IMR-90 (cell line): ENCODE measurements at regions of chr22 and their contacts with region 1.

Region 1: DNA sequence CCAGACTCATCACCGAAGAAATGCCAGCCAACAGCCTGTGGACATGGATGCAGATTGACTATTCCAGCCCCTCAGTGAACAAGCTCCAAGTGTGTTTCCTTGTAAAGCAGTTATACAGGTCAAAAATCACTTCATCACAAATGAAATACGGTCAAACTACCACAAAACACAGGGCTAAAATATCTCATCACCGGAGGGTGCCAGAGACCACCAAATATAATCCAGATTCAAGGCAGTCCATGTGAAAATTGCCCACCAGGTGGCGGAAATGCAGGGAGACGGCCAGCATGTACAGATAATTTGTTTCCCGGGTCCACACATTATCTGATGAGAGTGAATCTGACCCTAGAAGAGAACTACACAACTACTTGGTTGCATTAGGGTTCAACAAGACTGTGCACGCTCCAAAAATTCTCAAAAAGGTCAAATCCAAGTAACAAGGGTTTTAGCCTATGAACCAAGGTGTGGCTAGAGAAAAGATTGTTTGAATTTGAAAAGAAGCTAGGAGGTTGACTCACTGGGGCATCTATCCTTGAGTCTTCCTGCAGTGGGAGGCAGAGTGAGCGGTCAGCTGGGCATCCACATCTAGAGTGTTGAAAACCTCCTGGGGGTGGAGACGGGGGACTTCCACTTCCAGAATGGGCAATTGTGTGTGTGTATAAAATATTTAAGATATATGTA is 71.7 kb downstream of the IGLL5 start:
- DNase-seq: peak; percentile 66
- ATAC-seq: peak; percentile 73
- H3K4me3 ChIP-seq: no peak overlapping the region
- H3K27ac ChIP-seq: no peak overlapping the region
- H3K4me1 ChIP-seq: no peaks in the 10 kb centered on the region
- H3K27me3 ChIP-seq: peaks cover 3% of the 10 kb centered on the region
- CTCF ChIP-seq: peak; percentile 99
- POLR2A ChIP-seq: no peak
- RAD21 ChIP-seq: peak; percentile 91

Region 2: DNA sequence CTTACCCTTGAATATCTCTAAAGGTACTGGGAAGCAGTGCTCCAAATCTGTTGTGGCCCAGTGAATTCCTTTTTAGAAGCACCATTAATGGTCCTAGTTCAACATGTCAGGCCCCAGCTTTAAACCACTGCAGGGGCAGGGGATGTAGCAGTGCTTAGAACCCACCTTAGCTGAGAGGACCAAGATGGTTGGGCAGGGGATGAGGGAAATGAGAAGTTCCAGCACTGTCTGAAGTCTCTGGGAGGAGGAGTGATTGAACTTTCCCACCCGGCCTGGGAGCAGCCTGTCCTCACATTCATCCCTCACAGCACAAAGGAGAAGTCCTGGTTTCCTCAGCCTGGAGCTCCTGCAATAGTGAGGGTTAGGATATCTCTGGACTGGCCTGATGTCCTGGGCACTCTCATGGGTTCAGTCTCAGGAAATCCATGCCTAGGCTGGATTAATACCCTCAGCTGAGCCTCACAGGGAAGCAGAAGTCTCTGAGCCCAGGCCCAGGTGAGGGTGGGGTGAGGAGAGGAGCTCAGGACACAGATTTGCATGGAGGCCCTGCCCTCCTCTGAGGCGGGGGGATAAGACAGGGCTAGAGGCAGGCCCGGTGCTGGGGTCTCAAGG is 371.6 kb before region 1 on chr22:
- CTCF ChIA-PET with region 1: interaction called, 3 read pairs
- POLR2A ChIA-PET with region 1: no interaction called
- dilution Hi-C with region 1: no loop called
- in situ Hi-C with region 1: no loop called
- intact Hi-C with region 1: loop called (anchors 5 kb)
- DNase-seq: no peak
- ATAC-seq: no peak
- H3K4me3 ChIP-seq: no peak overlapping the region
- H3K27ac ChIP-seq: no peak overlapping the region
- H3K4me1 ChIP-seq: no peaks in the 10 kb centered on the region
- H3K27me3 ChIP-seq: peaks cover 10% of the 10 kb centered on the region
- CTCF ChIP-seq: no peak
- POLR2A ChIP-seq: no peak
- RAD21 ChIP-seq: no peak

Region 3: DNA sequence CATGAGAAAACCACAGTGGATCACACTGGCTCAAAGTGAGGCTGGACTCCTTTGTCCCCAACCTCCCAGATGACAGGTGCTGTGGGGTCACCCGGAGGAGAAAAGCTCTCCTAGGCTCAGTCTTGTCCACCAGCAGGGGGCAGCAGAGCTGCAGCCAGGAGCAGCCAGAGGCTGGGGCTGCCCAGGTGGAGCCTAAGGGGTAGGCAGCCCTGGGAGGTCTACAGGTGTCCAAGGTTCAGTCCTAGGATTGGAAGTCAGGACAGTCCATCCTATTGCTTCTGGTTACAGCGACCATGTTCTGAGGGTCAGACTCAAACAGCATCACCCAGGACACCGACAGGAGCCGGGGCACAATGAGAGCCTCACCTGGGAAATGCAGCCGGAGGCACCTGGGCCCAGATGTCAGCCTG is 149.3 kb before region 1 on chr22:
- CTCF ChIA-PET with region 1: no interaction called
- POLR2A ChIA-PET with region 1: no interaction called
- dilution Hi-C with region 1: no loop called
- in situ Hi-C with region 1: no loop called
- intact Hi-C with region 1: loop called (anchors 1 kb)
- DNase-seq: peak; percentile 30
- ATAC-seq: peak; percentile 77
- H3K4me3 ChIP-seq: no peak overlapping the region
- H3K27ac ChIP-seq: no peak overlapping the region
- H3K4me1 ChIP-seq: no peaks in the 10 kb centered on the region
- H3K27me3 ChIP-seq: no peaks in the 10 kb centered on the region; the same call in 1 of the 2 replicates
- CTCF ChIP-seq: peak; percentile 57
- POLR2A ChIP-seq: no peak
- RAD21 ChIP-seq: peak; percentile 46

Region 4: DNA sequence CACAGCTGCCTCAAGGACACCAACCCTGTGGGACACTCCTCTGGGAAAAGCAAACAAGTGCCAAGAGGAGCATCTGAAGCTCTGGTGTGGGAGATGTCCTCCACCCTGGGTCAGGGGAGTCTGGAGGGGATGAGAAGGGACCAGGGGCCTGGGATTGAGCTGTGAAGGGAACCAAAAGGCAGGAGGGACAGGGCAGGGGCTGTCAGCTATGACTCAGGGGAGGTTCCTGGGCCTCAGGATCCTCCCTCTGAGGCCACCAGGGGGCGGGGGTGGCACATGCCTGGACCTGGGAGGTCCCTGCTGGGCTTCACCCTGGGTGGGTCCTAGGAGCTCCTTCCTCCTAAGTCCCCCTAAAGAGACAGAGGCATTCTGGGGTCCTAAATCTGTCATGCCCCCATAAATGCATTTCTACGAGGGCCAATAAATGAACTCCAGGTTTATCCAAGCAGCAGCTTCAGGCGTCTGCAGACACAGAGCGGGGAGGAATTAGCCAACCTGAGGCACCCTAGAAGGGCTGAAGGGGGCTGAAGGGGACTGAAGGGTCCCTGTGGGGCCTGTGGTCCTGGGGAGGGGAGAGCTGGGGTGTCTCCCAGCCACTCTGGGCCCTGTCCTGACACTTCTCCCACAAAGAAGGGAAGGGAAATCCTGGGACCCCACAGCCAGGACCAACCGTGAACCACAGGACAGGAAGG is 103.5 kb before region 1 on chr22:
- CTCF ChIA-PET with region 1: no interaction called
- POLR2A ChIA-PET with region 1: no interaction called
- dilution Hi-C with region 1: no loop called
- in situ Hi-C with region 1: no loop called
- intact Hi-C with region 1: no loop called
- DNase-seq: no peak
- ATAC-seq: peak; percentile 74
- H3K4me3 ChIP-seq: no peak overlapping the region
- H3K27ac ChIP-seq: no peak overlapping the region
- H3K4me1 ChIP-seq: no peaks in the 10 kb centered on the region
- H3K27me3 ChIP-seq: peaks cover 10% of the 10 kb centered on the region
- CTCF ChIP-seq: peak; percentile 46
- POLR2A ChIP-seq: no peak
- RAD21 ChIP-seq: peak; percentile 37; the same call in 1 of the 2 replicates

Region 5: GRCh38 chr22:22884010-22884887 is 75.0 kb before region 1 on chr22:
- CTCF ChIA-PET with region 1: no interaction called
- POLR2A ChIA-PET with region 1: no interaction called
- dilution Hi-C with region 1: no loop called
- in situ Hi-C with region 1: no loop called
- intact Hi-C with region 1: no loop called
- DNase-seq: peak; percentile 45
- ATAC-seq: peak; percentile 85
- H3K4me3 ChIP-seq: no peak overlapping the region
- H3K27ac ChIP-seq: no peak overlapping the region
- H3K4me1 ChIP-seq: no peaks in the 10 kb centered on the region
- H3K27me3 ChIP-seq: peaks cover 7% of the 10 kb centered on the region
- CTCF ChIP-seq: peak; percentile 67
- POLR2A ChIP-seq: no peak
- RAD21 ChIP-seq: peak; percentile 79

Region 6: GRCh38 chr22:23128269-23129108 is 169.2 kb after region 1 on chr22:
- CTCF ChIA-PET with region 1: interaction called, 40 read pairs
- POLR2A ChIA-PET with region 1: no interaction called
- dilution Hi-C with region 1: no loop called
- in situ Hi-C with region 1: loop called (anchors 5 kb)
- intact Hi-C with region 1: loop called (anchors 1 kb)
- DNase-seq: peak; percentile 84
- ATAC-seq: peak; percentile 97
- H3K4me3 ChIP-seq: no peak overlapping the region
- H3K27ac ChIP-seq: no peak overlapping the region
- H3K4me1 ChIP-seq: peaks cover 3% of the 10 kb centered on the region; the same call in 1 of the 2 replicates
- H3K27me3 ChIP-seq: peaks cover 21% of the 10 kb centered on the region
- CTCF ChIP-seq: peak; percentile 96
- POLR2A ChIP-seq: 0 out of 2 replicates have a peak, but pooled peaks have one; percentile 28
- RAD21 ChIP-seq: peak; percentile 97

Region 7: DNA sequence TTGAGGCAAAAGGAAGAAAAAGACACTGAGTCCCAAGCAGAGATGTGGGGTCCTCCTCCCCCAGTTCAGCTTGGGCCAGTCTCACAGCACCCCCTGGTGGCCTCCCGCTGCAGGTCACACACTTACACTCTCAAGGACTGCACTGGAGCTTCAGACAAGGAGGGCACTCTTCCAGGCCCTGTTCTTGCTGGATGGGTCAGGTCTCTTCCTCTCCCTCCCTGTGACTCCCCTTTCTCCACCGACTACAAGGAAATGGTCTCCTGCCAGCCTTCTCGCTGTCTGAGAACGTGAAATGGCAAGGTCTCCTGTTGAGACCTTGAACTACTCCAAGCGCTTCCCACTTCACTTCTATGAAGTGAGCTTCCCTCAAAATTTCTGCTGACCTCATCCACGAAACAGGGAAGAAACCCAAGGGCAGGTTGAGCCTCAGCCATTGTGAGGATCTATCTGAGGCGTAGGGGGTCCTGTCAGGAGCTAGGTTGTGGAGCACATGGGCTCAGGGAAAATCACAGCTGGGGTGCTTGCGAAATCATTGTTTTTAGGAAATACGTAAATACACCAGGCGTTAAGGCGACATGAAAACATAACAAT is 632.0 kb after region 1 on chr22:
- CTCF ChIA-PET with region 1: no interaction called
- POLR2A ChIA-PET with region 1: no interaction called
- dilution Hi-C with region 1: no loop called
- in situ Hi-C with region 1: no loop called
- intact Hi-C with region 1: loop called (anchors 10 kb)
- DNase-seq: peak; percentile 54
- ATAC-seq: peak; percentile 99
- H3K4me3 ChIP-seq: no peak overlapping the region
- H3K27ac ChIP-seq: no peak overlapping the region
- H3K4me1 ChIP-seq: no peaks in the 10 kb centered on the region; the same call in 1 of the 2 replicates
- H3K27me3 ChIP-seq: peaks cover 2% of the 10 kb centered on the region
- CTCF ChIP-seq: peak; percentile 73
- POLR2A ChIP-seq: no peak
- RAD21 ChIP-seq: peak; percentile 84